AG04450 (cell line): ENCODE measurements at regions of chr11 and their contacts with region 1.

Region 1: DNA sequence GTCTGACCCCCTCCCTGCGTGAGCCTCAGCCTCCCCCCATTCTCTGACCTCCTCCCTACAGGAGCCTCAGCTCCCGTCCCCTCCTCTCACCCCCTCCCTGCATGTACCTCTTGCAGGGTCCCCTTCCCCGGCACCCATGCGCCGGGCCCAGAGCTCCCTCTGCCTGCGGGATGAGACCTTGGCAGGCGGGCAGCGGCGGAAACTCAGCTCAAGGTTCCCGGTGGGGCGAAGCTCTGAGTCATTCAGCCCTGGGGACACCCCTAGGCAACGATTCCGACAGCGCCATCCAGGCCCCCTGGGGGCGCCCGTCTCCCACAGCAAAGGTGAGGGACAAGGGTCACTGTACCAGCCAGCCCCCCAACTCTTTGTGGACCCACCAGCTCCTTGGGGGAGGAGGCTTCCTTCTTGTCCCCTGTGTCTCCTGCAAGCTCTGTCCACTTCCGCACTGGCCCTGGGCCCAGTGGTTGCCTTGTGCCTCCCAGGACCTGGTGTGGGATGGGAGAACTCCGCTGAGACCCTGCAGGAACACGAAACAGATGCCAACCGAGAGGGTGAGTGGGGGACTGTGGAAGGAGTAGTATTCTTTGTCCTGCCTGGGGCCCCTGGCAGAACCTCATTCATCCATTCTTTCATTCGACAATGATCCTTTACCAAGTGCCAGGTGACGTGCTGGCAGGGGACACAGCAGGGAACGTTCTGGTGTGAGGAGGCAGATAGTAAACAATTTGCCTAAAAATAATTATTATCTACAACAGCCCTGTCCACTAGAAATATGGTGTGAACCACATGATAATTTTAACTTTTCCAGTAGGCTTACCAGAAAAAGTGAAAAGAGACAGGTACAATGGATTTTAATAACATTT is 3.7 kb upstream of the RPS6KA4 start:
- DNase-seq: peak; percentile 39
- H3K4me3 ChIP-seq: peak overlapping the region; percentile 51
- H3K27ac ChIP-seq: no peak overlapping the region
- H3K27me3 ChIP-seq: no peaks in the 10 kb centered on the region
- CTCF ChIP-seq: peak; percentile 83

Region 2: GRCh38 chr11:62726915-62727763 is 1628.2 kb before region 1 on chr11 and contains the start of gene HNRNPUL2:
- CTCF ChIA-PET with region 1: no interaction called
- POLR2A ChIA-PET with region 1: interaction called, 11 read pairs
- DNase-seq: peak; percentile 99
- H3K4me3 ChIP-seq: peak within 1 kb of the TSS; percentile 99
- H3K27ac ChIP-seq: peak within 1 kb of the TSS; percentile 98
- H3K27me3 ChIP-seq: no peaks in the 10 kb centered on the region
- CTCF ChIP-seq: 0 out of 2 replicates have a peak, but pooled peaks have one; percentile 11
- polyA plus RNA-seq, gene HNRNPUL2: 26.6 and 28.2 TPM in 2 replicates

Region 3: GRCh38 chr11:64251016-64251752 is 104.1 kb before region 1 on chr11 and contains the start of gene PLCB3:
- CTCF ChIA-PET with region 1: interaction called, 15 read pairs
- POLR2A ChIA-PET with region 1: no interaction called
- DNase-seq: no peak
- H3K4me3 ChIP-seq: peak within 1 kb of the TSS; percentile 77
- H3K27ac ChIP-seq: peak within 1 kb of the TSS; percentile 11
- H3K27me3 ChIP-seq: no peaks in the 10 kb centered on the region
- CTCF ChIP-seq: peak; percentile 53
- polyA plus RNA-seq, gene PLCB3: 11.7 and 13.0 TPM in 2 replicates

Region 4: DNA sequence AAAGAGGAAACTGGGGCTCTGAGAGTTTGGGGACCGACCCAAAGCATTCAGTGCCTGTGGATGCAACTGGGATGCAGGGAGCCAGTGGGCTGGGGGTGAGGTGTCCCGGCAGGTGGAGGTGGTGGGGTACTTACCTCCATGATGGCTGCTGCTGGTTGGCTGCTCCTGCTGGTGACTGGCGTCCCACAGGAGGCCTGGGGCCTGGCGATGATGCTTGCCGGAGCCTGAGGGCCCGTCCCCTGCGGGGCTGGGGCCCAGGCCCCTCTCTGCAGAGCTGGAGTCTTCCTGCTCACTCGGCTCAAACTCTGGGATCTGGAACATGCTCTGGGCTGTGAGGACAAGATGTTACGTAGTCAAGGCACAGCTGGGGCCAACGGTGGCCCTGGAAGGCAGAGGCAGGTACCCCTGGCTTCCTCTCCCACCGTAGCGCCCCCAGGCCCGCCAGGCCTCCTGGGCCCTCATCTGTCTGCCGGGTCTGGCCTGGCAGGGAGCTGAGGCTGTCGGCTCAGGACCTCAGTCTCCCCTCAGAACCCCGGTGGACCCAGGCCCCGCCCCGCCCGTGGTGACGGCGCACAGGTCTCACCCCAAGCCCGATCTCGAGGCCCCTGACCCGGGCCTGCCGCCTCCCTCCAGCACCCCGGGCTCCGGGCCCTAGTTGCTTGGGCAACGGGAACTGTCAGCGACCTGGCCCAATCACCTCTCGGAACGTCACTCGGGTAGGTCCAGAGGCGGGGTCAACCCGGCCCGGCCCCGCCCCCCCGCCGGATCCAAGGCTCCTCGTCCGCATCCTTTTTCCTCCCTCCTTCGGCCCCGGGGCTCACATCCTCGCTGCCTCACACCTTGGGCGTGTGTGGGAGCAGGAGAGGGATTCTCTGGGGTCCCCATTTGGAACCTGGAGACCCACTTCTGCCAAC is 71.0 kb before region 1 on chr11 and contains the start of gene BAD:
- CTCF ChIA-PET with region 1: interaction called, 11 read pairs
- POLR2A ChIA-PET with region 1: no interaction called
- DNase-seq: peak; percentile 68
- H3K4me3 ChIP-seq: peak within 1 kb of the TSS; percentile 73
- H3K27ac ChIP-seq: peak within 1 kb of the TSS; percentile 88
- H3K27me3 ChIP-seq: no peaks in the 10 kb centered on the region
- CTCF ChIP-seq: no peak
- polyA plus RNA-seq, gene BAD: 36.1 and 54.8 TPM in 2 replicates

Region 5: DNA sequence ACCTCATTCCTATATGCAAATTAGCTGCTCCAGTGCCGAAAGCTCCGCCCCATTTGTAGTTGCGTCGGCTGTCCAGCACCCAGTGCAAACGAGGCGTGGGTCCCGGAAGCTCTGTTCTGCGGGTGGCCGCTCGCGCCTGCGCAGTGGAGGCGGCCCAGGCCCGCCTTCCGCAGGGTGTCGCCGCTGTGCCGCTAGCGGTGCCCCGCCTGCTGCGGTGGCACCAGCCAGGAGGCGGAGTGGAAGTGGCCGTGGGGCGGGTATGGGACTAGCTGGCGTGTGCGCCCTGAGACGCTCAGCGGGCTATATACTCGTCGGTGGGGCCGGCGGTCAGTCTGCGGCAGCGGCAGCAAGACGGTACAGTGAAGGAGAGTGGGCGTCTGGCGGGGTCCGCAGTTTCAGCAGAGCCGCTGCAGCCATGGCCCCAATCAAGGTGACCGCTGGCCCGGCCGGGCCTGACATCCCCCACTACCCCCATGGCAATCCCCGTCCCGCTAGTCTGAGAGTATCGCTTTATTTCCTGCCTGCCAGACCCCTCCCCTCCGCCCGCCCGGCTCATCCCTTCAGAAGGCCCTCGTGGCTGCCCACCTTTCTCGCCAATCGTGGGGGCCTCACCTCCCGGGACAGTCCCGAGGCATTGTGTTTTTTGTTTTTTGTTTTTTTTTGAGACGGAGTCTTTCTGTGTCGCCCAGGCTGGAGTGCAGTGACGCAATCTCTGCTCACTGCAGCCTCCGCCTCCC is 37.2 kb before region 1 on chr11 and contains the start of gene PRDX5:
- CTCF ChIA-PET with region 1: interaction called, 38 read pairs
- POLR2A ChIA-PET with region 1: interaction called, 10 read pairs
- DNase-seq: peak; percentile 85
- H3K4me3 ChIP-seq: peak within 1 kb of the TSS; percentile 90
- H3K27ac ChIP-seq: peak within 1 kb of the TSS; percentile 96
- H3K27me3 ChIP-seq: no peaks in the 10 kb centered on the region
- CTCF ChIP-seq: peak; percentile 12; the same call in 1 of the 2 replicates
- polyA plus RNA-seq, gene PRDX5: 366 and 383 TPM in 2 replicates

Region 6: DNA sequence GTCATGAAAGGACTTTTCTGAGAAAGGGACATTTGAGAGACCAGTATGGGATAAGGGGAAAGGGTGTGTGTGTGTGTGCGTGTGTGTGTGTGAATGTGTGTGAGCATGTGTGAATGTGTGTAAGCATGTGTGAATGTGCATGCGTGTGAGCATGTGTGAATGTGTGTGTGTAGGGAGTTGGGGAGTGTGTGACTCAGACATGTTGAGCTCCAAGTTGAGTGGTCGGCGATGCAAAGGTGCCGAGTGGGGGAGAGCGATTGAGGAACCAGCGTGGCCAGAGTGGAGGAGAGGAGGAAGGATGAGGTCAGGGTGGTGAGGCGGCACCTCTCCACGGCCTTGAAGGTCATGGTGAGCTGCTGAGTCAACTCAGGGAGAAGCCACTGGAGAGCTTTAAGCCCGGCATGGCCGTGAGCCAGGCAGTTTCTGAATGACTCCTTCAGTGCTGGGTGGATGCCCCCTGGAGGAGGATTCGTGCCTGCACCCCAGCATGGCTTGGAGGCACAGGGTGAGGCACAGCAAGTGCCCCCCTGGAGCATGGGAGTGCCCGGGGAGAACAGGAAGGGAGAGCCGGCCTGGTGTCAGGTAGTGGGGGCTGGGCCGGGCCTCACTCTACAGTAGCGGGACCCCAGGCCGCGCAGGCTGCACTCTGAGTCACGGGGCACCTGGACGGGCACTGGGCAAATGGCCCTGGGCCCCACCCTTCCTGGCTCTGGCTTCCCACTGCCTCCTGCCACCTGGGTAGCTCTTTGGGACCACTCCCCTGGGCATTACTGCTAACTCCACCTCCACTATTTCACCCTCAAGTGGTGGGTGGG is 23.5 kb before region 1 on chr11:
- CTCF ChIA-PET with region 1: interaction called, 21 read pairs
- POLR2A ChIA-PET with region 1: interaction called, 3 read pairs
- DNase-seq: peak; percentile 38
- H3K4me3 ChIP-seq: no peak overlapping the region
- H3K27ac ChIP-seq: no peak overlapping the region
- H3K27me3 ChIP-seq: peaks cover 3% of the 10 kb centered on the region
- CTCF ChIP-seq: peak; percentile 63

Region 7: GRCh38 chr11:64366751-64367428 is 11.6 kb after region 1 on chr11:
- CTCF ChIA-PET with region 1: interaction called, 14 read pairs
- POLR2A ChIA-PET with region 1: interaction called, 3 read pairs
- DNase-seq: no peak
- H3K4me3 ChIP-seq: no peak overlapping the region
- H3K27ac ChIP-seq: no peak overlapping the region
- H3K27me3 ChIP-seq: no peaks in the 10 kb centered on the region
- CTCF ChIP-seq: no peak